CD8-positive, alpha-beta memory T cell (primary cell): ENCODE measurements at regions of chr15 and their contacts with region 1.

Region 1: GRCh38 chr15:100572362-100572983 is 29.5 kb downstream of the LINS1 start:
- DNase-seq: peak in 1 of 5 donors; percentile 40
- H3K4me3 ChIP-seq: no peak overlapping the region
- H3K4me3 Mint-ChIP-seq: peak overlapping the region in 1 of 7 donors; percentile 13
- H3K27ac ChIP-seq: no peak overlapping the region
- H3K27ac Mint-ChIP-seq: peak overlapping the region in 4 of 8 donors; percentile 8 to 27 (median 18)
- H3K4me1 ChIP-seq: peaks cover 23% of the 10 kb centered on the region
- H3K4me1 Mint-ChIP-seq: peaks cover 26 to 46% (median 41%) of the 10 kb centered on the region in 3 donors
- H3K27me3 ChIP-seq: no peaks in the 10 kb centered on the region
- H3K27me3 Mint-ChIP-seq: no peaks in the 10 kb centered on the region

Region 2: DNA sequence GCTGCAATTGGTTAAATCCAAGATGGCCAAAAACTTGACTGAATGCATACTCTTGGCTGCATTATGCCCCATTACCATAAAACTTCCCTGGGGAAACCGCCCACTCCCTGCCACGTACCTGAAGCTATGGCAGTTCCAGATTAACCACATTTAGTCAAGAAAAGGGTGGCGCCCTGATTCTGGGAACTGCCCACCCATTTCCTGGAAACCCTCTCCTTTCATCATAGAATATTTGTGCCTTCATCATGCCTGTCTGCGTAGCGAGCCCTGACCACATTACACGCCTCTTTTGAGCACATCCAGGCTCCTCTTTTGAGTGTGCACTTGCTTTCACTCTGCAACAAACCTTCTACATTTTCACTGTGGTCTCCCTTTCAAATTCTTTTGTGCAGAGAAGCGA is 24.3 kb after region 1 on chr15:
- CTCF ChIA-PET with region 1: interaction called, 11 read pairs
- POLR2A ChIA-PET with region 1: no interaction called
- DNase-seq: peak; percentile 60 to 94 (median 86)
- H3K4me3 ChIP-seq: peak overlapping the region; percentile 47
- H3K4me3 Mint-ChIP-seq: peak overlapping the region; percentile 82 to 93 (median 84)
- H3K27ac ChIP-seq: peak overlapping the region; percentile 64
- H3K27ac Mint-ChIP-seq: peak overlapping the region; percentile 90 to 100 (median 96)
- H3K4me1 ChIP-seq: peaks cover 90% of the 10 kb centered on the region
- H3K4me1 Mint-ChIP-seq: peaks cover 54 to 71% (median 71%) of the 10 kb centered on the region in 3 donors
- H3K27me3 ChIP-seq: no peaks in the 10 kb centered on the region
- H3K27me3 Mint-ChIP-seq: no peaks in the 10 kb centered on the region

Region 3: DNA sequence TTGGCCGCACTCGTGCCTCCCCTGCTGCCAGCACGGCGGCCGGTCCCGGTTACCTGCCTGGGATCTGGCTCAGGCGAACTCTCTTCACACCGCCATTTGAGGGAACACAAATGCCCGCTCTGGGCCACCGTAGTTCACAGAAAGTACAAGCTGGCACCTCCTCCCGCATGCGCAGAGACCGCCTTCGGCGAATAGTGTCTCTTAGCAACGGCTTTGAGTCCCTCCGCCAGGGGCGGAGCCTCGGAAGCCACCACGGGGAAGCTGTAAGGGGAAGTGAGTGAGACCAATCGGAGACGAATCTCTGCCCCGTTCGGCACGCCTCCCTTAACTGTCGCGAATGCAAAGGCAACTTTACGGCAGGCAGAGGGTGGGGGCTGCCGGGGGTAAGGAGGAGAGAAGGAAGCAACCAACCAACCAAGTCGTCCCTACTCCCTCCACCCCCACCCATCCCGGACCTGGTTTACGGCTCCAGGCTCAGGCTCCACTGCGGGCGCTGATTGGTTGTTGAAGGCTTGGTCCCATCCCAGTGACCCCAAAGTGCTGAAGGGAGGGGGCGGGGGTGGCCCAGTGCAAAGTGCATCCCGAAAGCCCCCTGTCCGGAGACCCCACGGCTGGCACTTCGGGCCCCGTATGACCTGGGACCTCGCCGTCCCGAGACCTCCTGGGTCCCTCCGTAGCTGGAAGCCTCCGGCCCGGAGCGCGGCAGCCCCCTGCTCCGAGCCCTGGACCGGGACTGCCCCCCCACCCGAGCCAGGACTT is 29.8 kb after region 1 on chr15 and contains the starts of genes ASB7 and LINS1:
- CTCF ChIA-PET with region 1: interaction called, 11 read pairs
- POLR2A ChIA-PET with region 1: no interaction called
- DNase-seq: peak; percentile 100
- H3K4me3 ChIP-seq: peak within 1 kb of the TSS; percentile 96
- H3K4me3 Mint-ChIP-seq: no peak within 1 kb of the TSS
- H3K27ac ChIP-seq: peak within 1 kb of the TSS; percentile 87
- H3K27ac Mint-ChIP-seq: peak within 1 kb of the TSS in 7 of 8 donors; percentile 84 to 96 (median 95)
- H3K4me1 ChIP-seq: peaks cover 65% of the 10 kb centered on the region
- H3K4me1 Mint-ChIP-seq: peaks cover 39 to 60% (median 59%) of the 10 kb centered on the region in 3 donors
- H3K27me3 ChIP-seq: no peaks in the 10 kb centered on the region
- H3K27me3 Mint-ChIP-seq: no peaks in the 10 kb centered on the region
- total RNA-seq, gene ASB7: 14.9 to 16.0 TPM
- total RNA-seq, gene LINS1: 29.6 to 31.0 TPM